K562 (cell line): ENCODE measurements at regions of chr5 and their contacts with region 1.

Region 1: DNA sequence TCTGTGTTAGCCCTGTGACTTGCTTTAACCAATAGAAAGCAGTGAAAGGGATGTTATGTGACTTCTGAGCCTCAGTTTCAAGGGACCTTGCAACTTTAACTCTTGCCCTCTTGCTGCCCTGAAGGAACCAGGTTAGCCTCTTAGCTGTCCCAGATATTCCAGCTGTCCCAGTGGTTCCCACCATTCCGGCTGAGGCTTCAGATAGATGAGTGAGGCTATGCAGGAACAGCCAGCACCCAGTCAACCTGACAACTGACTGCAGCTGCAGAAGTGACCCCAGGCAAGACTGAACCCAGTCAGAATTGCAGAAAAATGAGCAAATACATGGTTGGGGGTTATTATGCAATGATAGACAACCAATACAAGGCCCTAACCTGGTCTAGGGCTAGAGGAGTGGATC is 10.4 kb upstream of the CDC23 start:
- DNase-seq: no peak
- ATAC-seq: no peak; the same call in 1 of the 3 replicates
- H3K4me3 ChIP-seq: no peak overlapping the region
- H3K27ac ChIP-seq: no peak overlapping the region
- H3K4me1 ChIP-seq: peaks cover 0 to 4% of the 10 kb centered on the region in 2 experiments; a peak in 2 of 5 replicates
- H3K27me3 ChIP-seq: no peaks in the 10 kb centered on the region
- CTCF ChIP-seq: no peak
- EP300 ChIP-seq: no peak
- POLR2A ChIP-seq: no peak
- RAD21 ChIP-seq: no peak

Region 2: GRCh38 chr5:138138949-138139780 is 84.4 kb before region 1 on chr5 and contains the start of gene NME5:
- CTCF ChIA-PET with region 1: no interaction called
- POLR2A ChIA-PET with region 1: no interaction called
- in situ Hi-C with region 1: no loop called
- intact Hi-C with region 1: no loop called
- DNase-seq: peak in 1 of 4 experiments; percentile 16
- ATAC-seq: peak; percentile 32; the same call in 1 of the 3 replicates
- H3K4me3 ChIP-seq: no peak within 1 kb of the TSS
- H3K27ac ChIP-seq: no peak within 1 kb of the TSS
- H3K4me1 ChIP-seq: no peaks in the 10 kb centered on the region
- H3K27me3 ChIP-seq: peaks cover 18 to 27% of the 10 kb centered on the region in 2 experiments; a peak in 4 of 5 replicates
- CTCF ChIP-seq: no peak
- EP300 ChIP-seq: no peak
- POLR2A ChIP-seq: no peak
- RAD21 ChIP-seq: no peak
- polyA plus RNA-seq, gene NME5: not detected

Region 3: DNA sequence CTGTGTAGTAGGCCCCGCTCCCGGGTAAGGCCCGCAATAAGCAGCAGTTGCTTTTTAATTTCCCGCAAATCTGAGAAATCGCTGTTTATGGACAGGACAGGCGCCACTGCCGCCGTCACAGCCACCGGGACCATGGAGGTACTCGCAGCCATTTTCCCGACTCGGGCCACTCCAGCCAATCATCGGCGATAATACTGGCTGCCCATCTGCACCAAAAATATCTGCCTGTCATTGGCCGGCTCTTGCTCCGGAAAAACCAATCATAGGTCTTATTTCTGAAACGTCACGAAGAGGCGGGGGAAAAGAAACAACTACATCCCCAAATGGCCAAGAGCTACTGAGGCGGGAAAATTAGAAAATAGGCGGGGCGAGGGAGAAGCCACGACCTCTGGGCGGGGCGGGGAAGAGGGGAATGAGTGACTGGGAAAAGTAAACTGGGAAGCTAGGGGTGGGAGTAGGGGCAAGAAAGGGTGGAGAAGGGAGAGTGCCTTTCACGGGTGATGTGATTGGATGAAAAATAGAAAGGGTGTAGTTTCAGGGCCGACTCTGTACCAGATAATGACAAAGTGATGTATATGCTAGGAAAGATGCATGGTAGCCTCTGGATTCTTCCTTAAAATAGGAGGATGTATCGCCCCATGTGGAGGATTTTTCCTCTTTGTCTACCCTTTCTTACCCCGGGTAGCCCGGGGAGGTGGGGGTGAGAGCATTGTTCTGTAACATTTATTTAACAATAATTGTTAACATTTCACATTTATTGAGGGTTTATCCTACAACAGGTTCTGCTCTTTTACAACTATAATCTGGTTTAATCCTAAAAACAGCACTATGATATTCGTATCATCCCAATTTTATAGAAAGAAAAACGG is 10.1 kb before region 1 on chr5 and contains the start of gene CDC23:
- CTCF ChIA-PET with region 1: no interaction called
- POLR2A ChIA-PET with region 1: interaction called, 13 read pairs
- in situ Hi-C with region 1: no loop called
- intact Hi-C with region 1: no loop called
- DNase-seq: peak; percentile 93 to 99 (median 96)
- ATAC-seq: peak; percentile 98
- H3K4me3 ChIP-seq: peak within 1 kb of the TSS; percentile 88
- H3K27ac ChIP-seq: peak within 1 kb of the TSS; percentile 89
- H3K4me1 ChIP-seq: peaks cover 3 to 7% of the 10 kb centered on the region in 2 experiments; a peak in 3 of 5 replicates
- H3K27me3 ChIP-seq: no peaks in the 10 kb centered on the region
- CTCF ChIP-seq: no peak
- EP300 ChIP-seq: no peak
- POLR2A ChIP-seq: peak; percentile 96
- RAD21 ChIP-seq: no peak
- polyA plus RNA-seq, gene CDC23: 123 to 157 TPM

Region 4: GRCh38 chr5:138408023-138408422 is 184.5 kb after region 1 on chr5:
- CTCF ChIA-PET with region 1: no interaction called
- POLR2A ChIA-PET with region 1: no interaction called
- in situ Hi-C with region 1: no loop called
- intact Hi-C with region 1: loop called (anchors 2 kb)
- DNase-seq: peak in 1 of 4 experiments; percentile 5
- ATAC-seq: peak; percentile 43
- H3K4me3 ChIP-seq: no peak overlapping the region
- H3K27ac ChIP-seq: no peak overlapping the region
- H3K4me1 ChIP-seq: no peaks in the 10 kb centered on the region
- H3K27me3 ChIP-seq: no peaks in the 10 kb centered on the region
- CTCF ChIP-seq: no peak
- EP300 ChIP-seq: no peak
- POLR2A ChIP-seq: no peak
- RAD21 ChIP-seq: no peak

Region 5: DNA sequence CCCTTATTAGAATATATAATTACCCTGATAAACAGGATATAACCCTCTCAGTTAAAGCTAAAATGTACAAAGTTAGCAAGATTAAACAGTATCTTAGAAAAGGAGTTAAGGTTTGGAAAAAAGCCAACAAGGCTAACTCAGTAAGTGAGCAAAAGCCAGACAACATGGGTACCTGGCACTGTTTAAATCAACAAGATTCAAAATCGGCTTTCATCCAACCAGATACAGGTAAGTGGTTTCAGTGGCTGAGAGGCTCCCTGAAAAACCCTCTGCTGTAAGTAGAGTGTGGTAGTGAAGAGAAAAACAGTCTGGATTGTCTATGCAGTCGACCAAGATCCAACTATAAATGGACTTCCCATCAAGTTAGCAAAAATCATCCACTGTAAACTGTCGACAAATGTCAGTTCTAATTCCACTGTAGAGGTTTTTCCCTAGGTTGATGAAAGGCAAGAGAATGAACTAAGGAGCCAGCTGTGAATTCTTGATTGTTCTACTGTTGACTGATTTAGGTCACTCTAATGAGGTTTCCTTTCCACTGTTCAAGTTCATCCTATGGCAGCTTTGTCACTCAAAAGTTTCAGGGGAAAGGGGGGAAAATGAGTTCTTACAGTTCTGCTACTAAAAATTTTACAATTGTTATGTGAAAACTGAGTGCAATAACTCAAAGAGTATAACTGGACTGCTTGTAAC is 292.2 kb after region 1 on chr5:
- CTCF ChIA-PET with region 1: no interaction called
- POLR2A ChIA-PET with region 1: no interaction called
- in situ Hi-C with region 1: no loop called
- intact Hi-C with region 1: no loop called
- DNase-seq: no peak
- ATAC-seq: no peak
- H3K4me3 ChIP-seq: no peak overlapping the region
- H3K27ac ChIP-seq: no peak overlapping the region
- H3K4me1 ChIP-seq: 0 out of 5 replicates have a peak, but pooled peaks cover 0 to 1% of the 10 kb centered on the region in 2 experiments
- H3K27me3 ChIP-seq: no peaks in the 10 kb centered on the region
- CTCF ChIP-seq: no peak
- EP300 ChIP-seq: no peak
- POLR2A ChIP-seq: no peak
- RAD21 ChIP-seq: no peak

Region 6: GRCh38 chr5:139051392-139051791 is 827.9 kb after region 1 on chr5:
- CTCF ChIA-PET with region 1: no interaction called
- POLR2A ChIA-PET with region 1: no interaction called
- in situ Hi-C with region 1: no loop called
- intact Hi-C with region 1: no loop called
- DNase-seq: no peak
- ATAC-seq: no peak
- H3K4me3 ChIP-seq: no peak overlapping the region
- H3K27ac ChIP-seq: no peak overlapping the region
- H3K4me1 ChIP-seq: no peaks in the 10 kb centered on the region
- H3K27me3 ChIP-seq: no peaks in the 10 kb centered on the region
- CTCF ChIP-seq: no peak
- EP300 ChIP-seq: no peak
- POLR2A ChIP-seq: no peak
- RAD21 ChIP-seq: no peak